Activated naive CD4-positive, alpha-beta T cell treated with anti-CD3 and anti-CD28 coated beads, Interleukin-2, amount 10 ng/mL, durations not matched to agents 7 days and 5 days (primary cell): ENCODE measurements at regions of chr11 and their contacts with region 1.

Region 1: GRCh38 chr11:66136752-66137123 is 66.7 kb downstream of the PACS1 start:
- DNase-seq: no peak
- H3K4me3 Mint-ChIP-seq: no peak overlapping the region
- H3K27ac Mint-ChIP-seq: no peak overlapping the region
- H3K4me1 Mint-ChIP-seq: peaks cover 22% of the 10 kb centered on the region
- H3K27me3 Mint-ChIP-seq: no peaks in the 10 kb centered on the region

Region 2: GRCh38 chr11:66045177-66045639 is 91.5 kb before region 1 on chr11:
- CTCF ChIA-PET with region 1: interaction called, 28 read pairs
- DNase-seq: peak; percentile 89
- H3K4me3 Mint-ChIP-seq: no peak overlapping the region
- H3K27ac Mint-ChIP-seq: peak overlapping the region; percentile 30
- H3K4me1 Mint-ChIP-seq: peaks cover 25% of the 10 kb centered on the region
- H3K27me3 Mint-ChIP-seq: peaks cover 70% of the 10 kb centered on the region